B cell (primary cell): ENCODE measurements at regions of chr17 and their contacts with region 1.

Region 1: DNA sequence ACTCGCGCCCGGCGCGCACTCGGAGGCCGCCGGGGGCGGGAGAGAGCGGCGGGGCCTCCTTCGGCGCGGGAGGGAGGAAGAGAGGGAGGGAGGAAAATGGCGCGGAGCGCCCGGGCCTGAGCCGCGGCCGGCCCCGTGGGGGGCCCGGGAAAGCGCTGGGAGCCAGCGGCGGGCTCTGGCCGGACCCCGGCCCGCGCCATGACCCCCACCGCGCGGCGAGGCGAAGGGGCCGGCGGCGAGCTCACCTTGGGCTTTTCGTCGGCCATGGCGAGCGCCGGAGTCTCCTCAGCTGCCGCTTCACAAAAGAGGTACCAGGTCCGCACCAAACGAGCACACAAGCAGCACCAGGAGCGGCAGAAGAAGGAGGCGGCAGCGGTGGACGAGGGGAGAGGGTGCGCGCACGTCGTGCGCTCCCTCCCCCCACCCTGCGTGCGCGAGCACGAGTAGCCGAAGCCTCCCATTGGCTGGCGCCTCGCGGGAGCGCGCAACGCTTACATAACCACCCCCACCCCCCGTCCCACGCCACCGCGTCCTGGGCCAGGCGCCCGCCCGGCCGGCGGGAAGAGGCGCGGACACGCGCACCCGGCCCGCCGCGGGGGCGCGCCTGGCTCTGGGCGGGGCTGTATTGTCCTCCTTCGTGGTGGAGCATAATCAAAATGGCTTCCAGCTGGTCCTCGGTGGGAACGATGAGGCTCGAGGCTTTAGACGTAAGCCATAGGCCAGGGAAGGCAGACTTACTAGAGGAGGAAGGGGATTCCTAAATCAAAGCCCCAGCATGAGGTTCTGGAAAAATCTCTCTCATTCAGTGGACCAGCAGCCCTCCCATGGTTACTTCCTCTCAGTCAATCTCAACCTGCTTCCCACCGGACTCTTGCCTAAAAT is at the start of gene SUMO2:
- DNase-seq: peak; percentile 99
- ATAC-seq: peak; percentile 82
- H3K4me3 ChIP-seq: peak within 1 kb of the TSS; percentile 80 to 93 (median 87)
- H3K4me3 Mint-ChIP-seq: peak within 1 kb of the TSS; percentile 90
- H3K27ac ChIP-seq: peak within 1 kb of the TSS; percentile 94 to 96
- H3K27ac Mint-ChIP-seq: peak within 1 kb of the TSS; percentile 99
- H3K4me1 ChIP-seq: peaks cover 15 to 21% of the 10 kb centered on the region in 2 donors
- H3K4me1 Mint-ChIP-seq: peaks cover 26% of the 10 kb centered on the region
- H3K27me3 ChIP-seq: no peaks in the 10 kb centered on the region
- H3K27me3 Mint-ChIP-seq: no peaks in the 10 kb centered on the region
- CTCF ChIP-seq: no peak
- total RNA-seq, gene SUMO2: 229 and 234 TPM in 2 replicates

Region 2: GRCh38 chr17:75046582-75047289 is 136.1 kb before region 1 on chr17 and contains the starts of genes ATP5PD and KCTD2:
- CTCF ChIA-PET with region 1: no interaction called
- POLR2A ChIA-PET with region 1: interaction called, 4 read pairs
- intact Hi-C with region 1: loop called (anchors 5 kb)
- DNase-seq: peak; percentile 96
- ATAC-seq: peak; percentile 97
- H3K4me3 ChIP-seq: peak within 1 kb of the TSS; percentile 77 to 97 (median 89)
- H3K4me3 Mint-ChIP-seq: peak within 1 kb of the TSS; percentile 96
- H3K27ac ChIP-seq: peak within 1 kb of the TSS; percentile 46 to 89
- H3K27ac Mint-ChIP-seq: peak within 1 kb of the TSS; percentile 94
- H3K4me1 ChIP-seq: peaks cover 13 to 16% of the 10 kb centered on the region in 2 donors
- H3K4me1 Mint-ChIP-seq: peaks cover 27% of the 10 kb centered on the region
- H3K27me3 ChIP-seq: no peaks in the 10 kb centered on the region
- H3K27me3 Mint-ChIP-seq: no peaks in the 10 kb centered on the region
- CTCF ChIP-seq: no peak
- total RNA-seq, gene ATP5PD: 98.8 and 101 TPM in 2 replicates
- total RNA-seq, gene KCTD2: 23.2 and 24.6 TPM in 2 replicates

Region 3: DNA sequence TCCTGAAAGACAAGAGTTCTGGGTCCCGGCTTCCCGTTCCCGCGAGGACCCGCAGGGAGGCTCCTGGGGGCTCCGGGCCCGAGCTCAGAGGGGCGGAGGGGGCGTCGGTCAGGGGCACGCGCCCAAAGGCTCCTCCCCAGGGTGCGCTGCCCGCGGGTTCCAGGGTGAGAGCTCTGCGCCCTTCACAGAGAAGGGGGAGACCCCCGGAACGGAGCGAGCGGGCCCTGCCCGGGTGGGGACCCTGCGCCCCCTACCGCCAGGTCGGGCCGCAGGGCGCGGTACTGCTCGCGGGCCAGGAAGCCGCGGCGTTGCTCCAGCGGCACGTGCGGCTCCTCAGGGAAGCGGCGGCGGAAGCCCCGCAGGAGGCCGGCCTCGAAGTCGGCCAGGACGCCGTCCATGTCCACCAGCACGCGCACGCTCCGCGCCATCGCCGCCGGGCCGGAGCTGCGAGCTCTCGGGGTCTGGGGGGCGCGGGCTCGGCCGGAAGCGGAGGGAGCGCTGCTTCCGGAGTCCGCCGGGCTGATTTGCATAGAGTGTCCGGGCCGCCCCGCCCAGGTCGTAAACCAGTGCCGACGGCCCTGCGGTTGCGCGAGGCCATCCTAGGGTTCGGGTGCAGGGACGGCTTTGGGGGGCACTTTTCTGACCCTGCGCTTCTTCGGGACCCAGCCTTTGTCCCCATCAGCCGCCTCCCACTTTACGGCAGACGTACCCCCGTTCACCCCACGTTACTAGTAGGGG is 51.4 kb before region 1 on chr17 and contains the start of gene NT5C:
- CTCF ChIA-PET with region 1: interaction called, 6 read pairs
- POLR2A ChIA-PET with region 1: interaction called, 7 read pairs
- intact Hi-C with region 1: loop called (anchors 1 kb)
- DNase-seq: peak; percentile 88
- ATAC-seq: peak; percentile 83
- H3K4me3 ChIP-seq: peak within 1 kb of the TSS; percentile 40 to 95 (median 87)
- H3K4me3 Mint-ChIP-seq: peak within 1 kb of the TSS; percentile 90
- H3K27ac ChIP-seq: peak within 1 kb of the TSS; percentile 64 to 85
- H3K27ac Mint-ChIP-seq: peak within 1 kb of the TSS; percentile 96
- H3K4me1 ChIP-seq: peaks cover 11 to 25% of the 10 kb centered on the region in 2 donors
- H3K4me1 Mint-ChIP-seq: peaks cover 35% of the 10 kb centered on the region
- H3K27me3 ChIP-seq: no peaks in the 10 kb centered on the region
- H3K27me3 Mint-ChIP-seq: no peaks in the 10 kb centered on the region
- CTCF ChIP-seq: peak; percentile 73
- total RNA-seq, gene NT5C: 98.9 and 103 TPM in 2 replicates

Region 4: GRCh38 chr17:75154195-75155106 is 28.4 kb before region 1 on chr17 and contains the start of gene JPT1:
- CTCF ChIA-PET with region 1: no interaction called
- POLR2A ChIA-PET with region 1: interaction called, 15 read pairs
- intact Hi-C with region 1: no loop called
- DNase-seq: peak; percentile 98
- ATAC-seq: peak; percentile 97
- H3K4me3 ChIP-seq: peak within 1 kb of the TSS; percentile 69 to 83 (median 74)
- H3K4me3 Mint-ChIP-seq: peak within 1 kb of the TSS; percentile 95
- H3K27ac ChIP-seq: peak within 1 kb of the TSS; percentile 2 to 65
- H3K27ac Mint-ChIP-seq: peak within 1 kb of the TSS; percentile 89
- H3K4me1 ChIP-seq: peaks cover 15 to 27% of the 10 kb centered on the region in 2 donors
- H3K4me1 Mint-ChIP-seq: peaks cover 30% of the 10 kb centered on the region
- H3K27me3 ChIP-seq: no peaks in the 10 kb centered on the region
- H3K27me3 Mint-ChIP-seq: no peaks in the 10 kb centered on the region
- CTCF ChIP-seq: no peak
- total RNA-seq, gene JPT1: 37.6 and 37.8 TPM in 2 replicates

Region 5: GRCh38 chr17:75271233-75271954 is 88.6 kb after region 1 on chr17:
- CTCF ChIA-PET with region 1: no interaction called
- POLR2A ChIA-PET with region 1: interaction called, 3 read pairs
- intact Hi-C with region 1: loop called (anchors 1 kb)
- DNase-seq: peak; percentile 94
- ATAC-seq: peak; percentile 90
- H3K4me3 ChIP-seq: peak overlapping the region; percentile 26 to 93 (median 74)
- H3K4me3 Mint-ChIP-seq: peak overlapping the region; percentile 88
- H3K27ac ChIP-seq: peak overlapping the region; percentile 78 to 83
- H3K27ac Mint-ChIP-seq: peak overlapping the region; percentile 82
- H3K4me1 ChIP-seq: peaks cover 17 to 28% of the 10 kb centered on the region in 2 donors
- H3K4me1 Mint-ChIP-seq: peaks cover 23% of the 10 kb centered on the region
- H3K27me3 ChIP-seq: no peaks in the 10 kb centered on the region
- H3K27me3 Mint-ChIP-seq: no peaks in the 10 kb centered on the region
- CTCF ChIP-seq: peak; percentile 73

Region 6: GRCh38 chr17:75456417-75457046 is 273.7 kb after region 1 on chr17 and contains the start of gene TMEM94:
- CTCF ChIA-PET with region 1: no interaction called
- POLR2A ChIA-PET with region 1: no interaction called
- intact Hi-C with region 1: loop called (anchors 2 kb)
- DNase-seq: peak; percentile 97
- ATAC-seq: peak; percentile 98
- H3K4me3 ChIP-seq: peak within 1 kb of the TSS; percentile 75 to 99 (median 84)
- H3K4me3 Mint-ChIP-seq: peak within 1 kb of the TSS; percentile 96
- H3K27ac ChIP-seq: peak within 1 kb of the TSS; percentile 60 to 79
- H3K27ac Mint-ChIP-seq: peak within 1 kb of the TSS; percentile 88
- H3K4me1 ChIP-seq: peaks cover 14 to 20% of the 10 kb centered on the region in 2 donors
- H3K4me1 Mint-ChIP-seq: peaks cover 42% of the 10 kb centered on the region
- H3K27me3 ChIP-seq: no peaks in the 10 kb centered on the region
- H3K27me3 Mint-ChIP-seq: no peaks in the 10 kb centered on the region
- CTCF ChIP-seq: no peak
- total RNA-seq, gene TMEM94: 112 and 139 TPM in 2 replicates